MCF 10A (cell line): ENCODE measurements at regions of chr9 and their contacts with region 1.

Region 1: GRCh38 chr9:33374634-33375213 is 27.6 kb downstream of the AQP7 start:
- DNase-seq: peak; percentile 79
- H3K4me3 Mint-ChIP-seq: no peak overlapping the region
- H3K27ac Mint-ChIP-seq: no peak overlapping the region
- H3K4me1 Mint-ChIP-seq: peaks cover 10% of the 10 kb centered on the region
- H3K27me3 Mint-ChIP-seq: no peaks in the 10 kb centered on the region
- CTCF ChIP-seq: peak; percentile 83

Region 2: GRCh38 chr9:33329117-33329563 is 45.6 kb before region 1 on chr9:
- CTCF ChIA-PET with region 1: interaction called, 4 read pairs
- POLR2A ChIA-PET with region 1: interaction called, 11 read pairs
- intact Hi-C with region 1: no loop called
- DNase-seq: peak; percentile 98
- H3K4me3 Mint-ChIP-seq: peak overlapping the region; percentile 35
- H3K27ac Mint-ChIP-seq: peak overlapping the region; percentile 86
- H3K4me1 Mint-ChIP-seq: peaks cover 26% of the 10 kb centered on the region
- H3K27me3 Mint-ChIP-seq: no peaks in the 10 kb centered on the region
- CTCF ChIP-seq: no peak

Region 3: GRCh38 chr9:33415501-33416038 is 40.8 kb after region 1 on chr9:
- CTCF ChIA-PET with region 1: interaction called, 23 read pairs
- POLR2A ChIA-PET with region 1: no interaction called
- intact Hi-C with region 1: no loop called
- DNase-seq: peak; percentile 82
- H3K4me3 Mint-ChIP-seq: no peak overlapping the region
- H3K27ac Mint-ChIP-seq: peak overlapping the region; percentile 36
- H3K4me1 Mint-ChIP-seq: peaks cover 34% of the 10 kb centered on the region
- H3K27me3 Mint-ChIP-seq: no peaks in the 10 kb centered on the region
- CTCF ChIP-seq: peak; percentile 57

Region 4: GRCh38 chr9:33452828-33453271 is 78.1 kb after region 1 on chr9:
- CTCF ChIA-PET with region 1: interaction called, 14 read pairs
- POLR2A ChIA-PET with region 1: interaction called, 6 read pairs
- intact Hi-C with region 1: no loop called
- DNase-seq: peak; percentile 96
- H3K4me3 Mint-ChIP-seq: no peak overlapping the region
- H3K27ac Mint-ChIP-seq: no peak overlapping the region
- H3K4me1 Mint-ChIP-seq: peaks cover 13% of the 10 kb centered on the region
- H3K27me3 Mint-ChIP-seq: no peaks in the 10 kb centered on the region
- CTCF ChIP-seq: peak; percentile 66

Region 5: GRCh38 chr9:33473643-33474352 is 99.1 kb after region 1 on chr9 and contains the start of gene NOL6:
- CTCF ChIA-PET with region 1: interaction called, 63 read pairs
- POLR2A ChIA-PET with region 1: interaction called, 3 read pairs
- intact Hi-C with region 1: no loop called
- DNase-seq: peak; percentile 100
- H3K4me3 Mint-ChIP-seq: peak within 1 kb of the TSS; percentile 97
- H3K27ac Mint-ChIP-seq: peak within 1 kb of the TSS; percentile 89
- H3K4me1 Mint-ChIP-seq: peaks cover 10% of the 10 kb centered on the region
- H3K27me3 Mint-ChIP-seq: no peaks in the 10 kb centered on the region
- CTCF ChIP-seq: no peak
- total RNA-seq, gene NOL6: 37.2 and 48.6 TPM in 2 replicates